ENCODE measurements at regions of chr3 and their contacts with region 1.

Region 1: DNA sequence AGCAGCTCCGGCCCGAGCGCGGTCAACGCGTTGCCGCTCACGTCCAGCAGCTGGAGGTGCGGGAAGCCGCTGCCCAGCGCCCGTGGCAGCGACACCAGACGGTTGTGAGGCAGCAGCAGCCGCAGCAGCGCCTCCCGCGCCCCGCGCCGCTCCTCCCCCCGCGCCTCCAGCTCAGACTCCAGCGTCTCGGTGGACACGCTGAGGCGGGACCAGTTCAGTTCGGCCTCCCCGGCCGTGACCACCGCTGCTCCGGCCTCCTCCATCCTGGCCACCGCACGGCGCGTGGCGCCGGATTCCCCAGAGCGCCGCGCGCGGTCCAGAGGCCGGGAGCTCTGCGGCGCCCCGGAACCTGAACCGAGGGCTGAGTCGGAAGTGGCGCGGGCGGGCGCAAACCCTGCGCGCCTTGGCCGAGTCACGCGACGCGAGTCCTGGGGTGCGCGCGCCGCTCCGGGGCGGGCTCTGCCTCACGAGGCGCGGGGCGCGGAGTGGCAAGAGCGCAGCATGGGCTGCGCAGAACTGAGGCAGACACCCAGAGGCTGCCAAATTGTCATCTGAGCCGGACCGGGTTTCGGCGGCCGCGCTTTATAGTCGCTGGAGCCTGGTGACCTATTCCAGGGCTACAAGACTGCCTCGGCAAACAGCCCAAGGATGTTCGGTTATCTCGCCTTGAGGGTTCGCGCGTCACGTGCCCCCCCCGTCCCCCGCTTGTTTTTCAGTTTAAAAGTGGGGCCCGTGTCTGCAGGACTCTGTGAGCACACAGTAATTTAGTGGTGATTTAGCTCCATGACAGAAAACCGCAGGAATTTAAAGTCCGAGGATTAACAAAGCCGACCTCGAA is at the start of gene LRRC58:
- DNase-seq: peak; percentile 77 to 95 (median 88)
- ATAC-seq: peak; percentile 90
- H3K4me3 ChIP-seq: peak within 1 kb of the TSS; percentile 71 to 83
- H3K4me3 Mint-ChIP-seq: peak within 1 kb of the TSS; percentile 89
- H3K27ac ChIP-seq: peak within 1 kb of the TSS; percentile 71 to 75
- H3K27ac Mint-ChIP-seq: peak within 1 kb of the TSS; percentile 94
- H3K4me1 ChIP-seq: peaks cover 44% of the 10 kb centered on the region
- H3K4me1 Mint-ChIP-seq: peaks cover 46% of the 10 kb centered on the region
- H3K27me3 ChIP-seq: no peaks in the 10 kb centered on the region
- H3K27me3 Mint-ChIP-seq: peaks cover 6% of the 10 kb centered on the region
- CTCF ChIP-seq: peak; percentile 35
- total RNA-seq, gene LRRC58: 16.1 to 17.0 TPM

Region 2: GRCh38 chr3:118618247-118619040 is 1730.8 kb before region 1 on chr3:
- CTCF ChIA-PET with region 1: no interaction called
- POLR2A ChIA-PET with region 1: no interaction called
- intact Hi-C with region 1: no loop called
- DNase-seq: no peak
- ATAC-seq: no peak
- H3K4me3 ChIP-seq: no peak overlapping the region
- H3K4me3 Mint-ChIP-seq: no peak overlapping the region
- H3K27ac ChIP-seq: no peak overlapping the region
- H3K27ac Mint-ChIP-seq: no peak overlapping the region
- H3K4me1 ChIP-seq: no peaks in the 10 kb centered on the region
- H3K4me1 Mint-ChIP-seq: no peaks in the 10 kb centered on the region
- H3K27me3 ChIP-seq: no peaks in the 10 kb centered on the region
- H3K27me3 Mint-ChIP-seq: no peaks in the 10 kb centered on the region
- CTCF ChIP-seq: no peak

Region 3: GRCh38 chr3:119293871-119294695 is 1055.1 kb before region 1 on chr3 and contains the start of gene ARHGAP31:
- CTCF ChIA-PET with region 1: no interaction called
- POLR2A ChIA-PET with region 1: interaction called, 7 read pairs
- intact Hi-C with region 1: loop called in 1 of 2 experiments (anchors 10 kb)
- DNase-seq: peak; percentile 71 to 96 (median 86)
- ATAC-seq: peak; percentile 64
- H3K4me3 ChIP-seq: peak within 1 kb of the TSS; percentile 61 to 82
- H3K4me3 Mint-ChIP-seq: peak within 1 kb of the TSS; percentile 95
- H3K27ac ChIP-seq: peak within 1 kb of the TSS; percentile 58 to 84
- H3K27ac Mint-ChIP-seq: peak within 1 kb of the TSS; percentile 98
- H3K4me1 ChIP-seq: peaks cover 30% of the 10 kb centered on the region
- H3K4me1 Mint-ChIP-seq: peaks cover 55% of the 10 kb centered on the region
- H3K27me3 ChIP-seq: no peaks in the 10 kb centered on the region
- H3K27me3 Mint-ChIP-seq: no peaks in the 10 kb centered on the region
- CTCF ChIP-seq: no peak
- total RNA-seq, gene ARHGAP31: 1.00 to 1.1 TPM

Region 4: GRCh38 chr3:119676771-119677640 is 672.2 kb before region 1 on chr3 and contains the start of gene COX17:
- CTCF ChIA-PET with region 1: no interaction called
- POLR2A ChIA-PET with region 1: no interaction called
- intact Hi-C with region 1: loop called (anchors 5 kb)
- DNase-seq: peak; percentile 92 to 99 (median 96)
- ATAC-seq: peak; percentile 86
- H3K4me3 ChIP-seq: peak within 1 kb of the TSS; percentile 26 to 79
- H3K4me3 Mint-ChIP-seq: peak within 1 kb of the TSS; percentile 87
- H3K27ac ChIP-seq: peak within 1 kb of the TSS; percentile 49 to 95
- H3K27ac Mint-ChIP-seq: peak within 1 kb of the TSS; percentile 96
- H3K4me1 ChIP-seq: peaks cover 20% of the 10 kb centered on the region
- H3K4me1 Mint-ChIP-seq: peaks cover 35% of the 10 kb centered on the region
- H3K27me3 ChIP-seq: no peaks in the 10 kb centered on the region
- H3K27me3 Mint-ChIP-seq: no peaks in the 10 kb centered on the region
- CTCF ChIP-seq: no peak
- total RNA-seq, gene COX17: 22.4 to 23.2 TPM

Region 5: GRCh38 chr3:119794971-119795612 is 554.1 kb before region 1 on chr3:
- CTCF ChIA-PET with region 1: no interaction called
- POLR2A ChIA-PET with region 1: no interaction called
- intact Hi-C with region 1: no loop called
- DNase-seq: no peak
- ATAC-seq: no peak
- H3K4me3 ChIP-seq: no peak overlapping the region
- H3K4me3 Mint-ChIP-seq: no peak overlapping the region
- H3K27ac ChIP-seq: no peak overlapping the region
- H3K27ac Mint-ChIP-seq: no peak overlapping the region
- H3K4me1 ChIP-seq: no peaks in the 10 kb centered on the region
- H3K4me1 Mint-ChIP-seq: no peaks in the 10 kb centered on the region
- H3K27me3 ChIP-seq: no peaks in the 10 kb centered on the region
- H3K27me3 Mint-ChIP-seq: peaks cover 8% of the 10 kb centered on the region
- CTCF ChIP-seq: no peak

Region 6: GRCh38 chr3:120039642-120040610 is 309.3 kb before region 1 on chr3:
- CTCF ChIA-PET with region 1: no interaction called
- POLR2A ChIA-PET with region 1: no interaction called
- intact Hi-C with region 1: loop called in 1 of 2 experiments (anchors 10 kb)
- DNase-seq: peak in 2 of 9 experiments; percentile 11 to 34
- ATAC-seq: no peak
- H3K4me3 ChIP-seq: no peak overlapping the region
- H3K4me3 Mint-ChIP-seq: no peak overlapping the region
- H3K27ac ChIP-seq: no peak overlapping the region
- H3K27ac Mint-ChIP-seq: no peak overlapping the region
- H3K4me1 ChIP-seq: peaks cover 4% of the 10 kb centered on the region
- H3K4me1 Mint-ChIP-seq: peaks cover 40% of the 10 kb centered on the region
- H3K27me3 ChIP-seq: no peaks in the 10 kb centered on the region
- H3K27me3 Mint-ChIP-seq: no peaks in the 10 kb centered on the region
- CTCF ChIP-seq: no peak

Region 7: DNA sequence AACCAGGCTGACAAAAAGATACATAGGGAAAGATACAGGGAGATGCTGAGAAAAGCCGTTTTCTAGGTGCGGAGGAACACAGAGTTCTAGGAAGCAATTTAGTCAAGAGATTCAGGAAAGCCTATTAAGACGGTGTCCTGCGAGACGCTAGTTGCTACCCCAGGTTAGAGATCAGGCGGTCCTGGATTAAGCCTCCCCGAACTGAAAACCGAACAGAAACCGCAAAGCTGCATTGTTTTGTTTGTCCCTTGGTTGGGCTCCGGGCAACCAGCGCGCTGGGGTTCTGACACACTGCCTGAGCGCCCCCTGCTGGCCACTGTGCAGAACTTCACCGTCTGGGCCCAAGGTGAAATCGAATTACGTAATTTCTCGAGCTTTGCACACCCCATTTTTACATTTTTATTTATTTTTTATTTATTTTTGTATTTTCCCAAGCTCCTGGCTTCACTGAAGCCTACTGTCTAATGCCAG is 209.6 kb after region 1 on chr3:
- CTCF ChIA-PET with region 1: interaction called, 5 read pairs
- POLR2A ChIA-PET with region 1: no interaction called
- intact Hi-C with region 1: loop called (anchors 2 to 5 kb)
- DNase-seq: peak; percentile 81 to 93 (median 89)
- ATAC-seq: peak; percentile 90
- H3K4me3 ChIP-seq: peak overlapping the region; percentile 33 to 46
- H3K4me3 Mint-ChIP-seq: peak overlapping the region; percentile 83
- H3K27ac ChIP-seq: peak overlapping the region; percentile 14 to 25
- H3K27ac Mint-ChIP-seq: peak overlapping the region; percentile 50
- H3K4me1 ChIP-seq: peaks cover 5% of the 10 kb centered on the region
- H3K4me1 Mint-ChIP-seq: peaks cover 16% of the 10 kb centered on the region
- H3K27me3 ChIP-seq: no peaks in the 10 kb centered on the region
- H3K27me3 Mint-ChIP-seq: peaks cover 5% of the 10 kb centered on the region
- CTCF ChIP-seq: peak; percentile 93

Region 8: DNA sequence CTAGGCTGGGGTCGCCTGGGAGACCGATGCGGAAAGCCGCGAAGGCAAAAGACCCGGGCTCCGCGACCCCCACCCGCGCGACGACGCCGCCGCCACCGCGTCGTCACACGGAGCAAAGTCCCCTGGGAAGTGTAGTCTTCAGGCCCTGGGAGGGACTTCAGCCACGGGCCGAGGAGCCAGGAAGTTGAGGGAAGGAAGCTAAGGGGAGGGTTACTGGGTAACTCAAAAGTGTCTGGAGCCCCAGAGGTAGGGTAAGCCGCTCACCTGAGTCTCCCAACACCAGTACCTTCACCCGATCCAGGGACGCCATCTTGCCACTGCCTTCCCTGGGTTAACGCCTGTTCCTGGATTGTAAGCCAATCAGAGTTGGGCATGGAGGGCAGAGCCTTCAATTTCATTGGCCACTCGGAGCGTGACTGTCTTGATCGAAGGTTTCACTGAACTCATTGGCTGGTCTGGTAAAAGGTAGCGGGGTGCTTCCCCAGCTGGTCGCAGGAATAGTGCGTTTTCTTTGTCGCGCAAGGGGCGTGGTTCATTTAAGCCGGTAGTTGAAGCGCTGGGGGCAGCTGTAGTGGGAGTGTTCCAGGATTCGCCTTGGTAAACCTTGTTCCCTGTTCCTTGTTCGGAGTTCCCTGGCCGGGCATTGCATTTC is 393.1 kb after region 1 on chr3 and contains the starts of genes GTF2E1 and RABL3:
- CTCF ChIA-PET with region 1: no interaction called
- POLR2A ChIA-PET with region 1: no interaction called
- intact Hi-C with region 1: loop called (anchors 1 to 5 kb)
- DNase-seq: peak; percentile 93 to 99 (median 97)
- ATAC-seq: peak; percentile 96
- H3K4me3 ChIP-seq: peak within 1 kb of the TSS; percentile 89 to 90
- H3K4me3 Mint-ChIP-seq: peak within 1 kb of the TSS; percentile 94
- H3K27ac ChIP-seq: peak within 1 kb of the TSS; percentile 97 to 98
- H3K27ac Mint-ChIP-seq: peak within 1 kb of the TSS; percentile 98
- H3K4me1 ChIP-seq: peaks cover 16% of the 10 kb centered on the region
- H3K4me1 Mint-ChIP-seq: peaks cover 49% of the 10 kb centered on the region
- H3K27me3 ChIP-seq: no peaks in the 10 kb centered on the region
- H3K27me3 Mint-ChIP-seq: no peaks in the 10 kb centered on the region
- CTCF ChIP-seq: no peak
- total RNA-seq, gene GTF2E1: 5.8 to 7.8 TPM
- total RNA-seq, gene RABL3: 14.0 to 15.2 TPM

Region 9: DNA sequence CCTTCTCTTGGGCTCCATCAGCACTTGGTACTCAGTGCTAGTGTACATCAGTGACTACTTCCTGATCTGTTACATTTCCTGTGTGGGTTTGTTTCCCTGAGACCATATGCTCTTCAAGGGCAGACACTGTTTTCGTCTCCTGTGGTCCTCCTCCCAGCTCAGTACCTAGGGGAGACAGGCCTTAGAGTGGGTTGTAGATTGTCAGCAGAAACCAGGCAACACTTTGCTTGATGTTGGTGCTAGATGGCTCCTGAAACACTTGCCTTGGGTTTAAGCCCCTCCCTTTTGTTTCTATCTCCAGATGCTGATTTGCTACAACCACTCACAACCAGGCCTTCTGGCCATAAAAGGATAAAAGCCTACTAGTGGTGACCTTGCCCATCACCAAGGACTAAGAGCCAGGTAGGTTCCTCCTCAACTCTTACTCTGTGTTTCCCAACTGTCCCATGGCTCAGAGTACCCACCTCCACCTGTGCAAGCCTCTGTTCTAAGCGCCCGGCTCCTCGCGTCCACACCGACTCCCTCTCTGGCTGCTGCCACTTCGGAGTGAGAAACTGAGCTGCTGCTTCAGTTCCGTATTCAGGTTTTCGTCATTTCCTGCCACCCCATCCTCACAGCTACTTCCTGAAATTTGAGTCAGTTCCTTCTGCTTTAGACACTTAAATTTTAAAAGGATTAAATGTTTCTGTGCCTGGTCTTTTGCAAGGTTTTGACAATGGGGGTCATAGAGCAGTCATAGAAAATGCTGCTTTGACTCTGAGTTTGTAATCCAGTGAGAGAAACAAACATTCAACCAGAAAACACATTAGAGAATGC is 1311.4 kb after region 1 on chr3 and contains the start of gene HCLS1:
- CTCF ChIA-PET with region 1: no interaction called
- POLR2A ChIA-PET with region 1: no interaction called
- intact Hi-C with region 1: loop called (anchors 10 kb)
- DNase-seq: peak; percentile 52 to 90 (median 71)
- ATAC-seq: peak; percentile 83
- H3K4me3 ChIP-seq: peak within 1 kb of the TSS; percentile 58
- H3K4me3 Mint-ChIP-seq: peak within 1 kb of the TSS; percentile 92
- H3K27ac ChIP-seq: peak within 1 kb of the TSS; percentile 86 to 95
- H3K27ac Mint-ChIP-seq: peak within 1 kb of the TSS; percentile 99
- H3K4me1 ChIP-seq: peaks cover 43% of the 10 kb centered on the region
- H3K4me1 Mint-ChIP-seq: peaks cover 54% of the 10 kb centered on the region
- H3K27me3 ChIP-seq: no peaks in the 10 kb centered on the region
- H3K27me3 Mint-ChIP-seq: no peaks in the 10 kb centered on the region
- CTCF ChIP-seq: no peak
- total RNA-seq, gene HCLS1: 162 to 179 TPM